A673 (cell line): ENCODE measurements at regions of chr6 and their contacts with region 1.

Region 1: DNA sequence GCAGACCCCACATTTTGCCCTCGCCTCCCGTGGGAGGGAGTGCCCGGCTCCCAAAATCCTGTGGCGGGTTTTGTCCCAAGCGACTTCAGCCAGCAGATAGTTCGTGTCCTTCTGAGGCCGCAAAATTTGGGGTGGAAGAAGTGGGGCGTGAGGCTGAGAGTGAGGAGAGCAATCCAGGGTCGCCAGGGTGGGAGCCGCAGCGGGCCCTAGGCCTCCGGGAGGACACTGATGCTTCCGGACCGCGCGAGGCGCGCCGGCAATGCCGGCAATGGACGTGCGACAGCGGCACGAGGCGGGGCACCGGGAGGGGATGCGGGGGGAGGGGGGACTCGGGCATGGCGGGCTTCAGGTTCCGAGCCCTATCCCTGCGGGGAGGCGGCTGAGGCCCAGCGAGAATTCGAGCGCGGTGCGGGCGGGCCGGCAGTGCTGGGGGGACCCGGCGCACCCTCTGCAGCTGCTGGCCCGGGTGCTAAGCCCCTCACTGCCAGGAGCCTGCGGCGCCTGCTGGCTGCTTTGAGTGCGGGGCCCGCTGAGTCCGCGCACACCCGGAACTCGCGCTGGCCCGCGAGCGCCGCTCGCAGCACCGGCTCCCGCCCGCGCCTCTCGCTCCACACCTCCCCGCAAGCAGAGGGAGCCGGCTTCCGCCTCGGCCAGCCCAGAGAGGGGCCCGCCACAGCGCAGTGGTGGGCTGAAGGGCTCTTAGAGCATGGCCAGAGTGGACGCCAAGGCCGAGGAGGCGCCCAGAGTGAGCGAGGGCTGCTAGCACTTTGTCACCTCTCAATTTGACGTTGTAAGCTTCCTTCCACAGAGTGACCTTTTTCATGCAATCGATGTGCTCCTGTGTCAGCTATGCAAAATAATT is 143.8 kb downstream of the LPA start:
- DNase-seq: peak; percentile 71
- H3K4me3 ChIP-seq: peak overlapping the region; percentile 49
- H3K27ac ChIP-seq: no peak overlapping the region
- H3K4me1 ChIP-seq: no peaks in the 10 kb centered on the region
- H3K27me3 ChIP-seq: peaks cover 13% of the 10 kb centered on the region
- CTCF ChIP-seq: no peak; the same call in 1 of the 2 replicates

Region 2: GRCh38 chr6:159017757-159018559 is 1502.3 kb before region 1 on chr6:
- CTCF ChIA-PET with region 1: no interaction called
- POLR2A ChIA-PET with region 1: no interaction called
- intact Hi-C with region 1: no loop called
- DNase-seq: no peak
- H3K4me3 ChIP-seq: no peak overlapping the region
- H3K27ac ChIP-seq: no peak overlapping the region
- H3K4me1 ChIP-seq: no peaks in the 10 kb centered on the region
- H3K27me3 ChIP-seq: no peaks in the 10 kb centered on the region
- CTCF ChIP-seq: no peak

Region 3: DNA sequence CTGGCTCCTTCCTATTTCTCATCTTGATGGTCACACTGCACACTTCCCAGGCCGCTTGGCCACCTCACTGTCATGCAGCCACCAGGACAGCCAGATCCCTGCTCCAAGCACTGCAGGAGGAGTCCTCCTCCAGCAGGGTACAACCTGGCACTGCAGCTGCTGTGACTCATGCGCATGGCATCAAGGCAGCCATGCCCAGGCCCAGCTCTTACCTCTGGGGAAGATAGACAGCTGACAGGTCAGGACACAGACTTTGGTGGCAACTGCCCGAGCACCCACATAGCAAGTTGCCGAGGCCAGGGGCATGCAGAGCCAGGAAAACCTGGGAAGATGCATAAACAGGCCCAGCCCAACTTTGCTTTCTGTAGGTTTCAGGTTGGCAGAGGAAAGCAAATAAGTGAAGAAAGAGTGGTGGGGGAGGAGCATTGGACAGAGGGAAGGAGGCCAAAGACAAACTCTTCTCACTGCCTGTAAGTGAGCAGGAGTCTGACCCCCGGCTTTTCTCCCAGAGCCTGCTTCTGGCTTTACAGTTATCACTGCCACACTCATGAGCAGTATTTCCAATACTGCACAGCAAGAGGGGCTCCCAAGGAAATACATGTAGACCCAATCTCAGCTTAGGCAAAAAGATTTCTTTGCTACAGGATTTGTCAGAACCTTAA is 133.3 kb before region 1 on chr6:
- CTCF ChIA-PET with region 1: no interaction called
- POLR2A ChIA-PET with region 1: no interaction called
- intact Hi-C with region 1: no loop called
- DNase-seq: no peak
- H3K4me3 ChIP-seq: no peak overlapping the region
- H3K27ac ChIP-seq: no peak overlapping the region
- H3K4me1 ChIP-seq: no peaks in the 10 kb centered on the region
- H3K27me3 ChIP-seq: peaks cover 12% of the 10 kb centered on the region
- CTCF ChIP-seq: no peak

Region 4: GRCh38 chr6:160510199-160510598 is 10.1 kb before region 1 on chr6:
- CTCF ChIA-PET with region 1: no interaction called
- POLR2A ChIA-PET with region 1: no interaction called
- intact Hi-C with region 1: no loop called
- DNase-seq: no peak
- H3K4me3 ChIP-seq: no peak overlapping the region
- H3K27ac ChIP-seq: no peak overlapping the region
- H3K4me1 ChIP-seq: no peaks in the 10 kb centered on the region
- H3K27me3 ChIP-seq: peaks cover 5% of the 10 kb centered on the region
- CTCF ChIP-seq: no peak

Region 5: GRCh38 chr6:160534050-160534696 is 13.9 kb after region 1 on chr6:
- CTCF ChIA-PET with region 1: interaction called, 10 read pairs
- POLR2A ChIA-PET with region 1: no interaction called
- intact Hi-C with region 1: no loop called
- DNase-seq: peak; percentile 54
- H3K4me3 ChIP-seq: no peak overlapping the region
- H3K27ac ChIP-seq: no peak overlapping the region
- H3K4me1 ChIP-seq: no peaks in the 10 kb centered on the region
- H3K27me3 ChIP-seq: no peaks in the 10 kb centered on the region
- CTCF ChIP-seq: peak; percentile 91

Region 6: DNA sequence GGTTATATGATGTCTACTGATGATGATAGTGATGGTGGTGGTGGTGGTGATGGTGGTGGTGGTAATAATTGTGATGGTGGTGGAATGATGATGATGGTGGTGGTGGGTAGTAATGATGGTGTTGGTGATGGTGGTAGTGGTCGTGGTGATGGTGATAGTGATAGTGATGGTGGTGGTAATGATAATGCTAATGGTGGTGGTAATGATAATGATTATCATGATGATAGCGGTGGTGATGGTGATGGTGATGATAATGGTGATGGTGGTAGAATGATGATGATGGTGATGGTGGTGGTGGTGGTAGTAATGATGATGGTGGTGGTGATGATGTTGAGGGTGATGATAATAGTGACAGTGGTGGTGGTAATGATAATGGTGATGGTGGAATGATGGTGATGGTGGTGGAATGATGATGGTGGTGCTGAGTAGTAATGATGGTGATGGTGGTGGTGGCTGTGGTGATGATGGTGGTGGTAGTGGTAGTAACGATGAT is 148.4 kb after region 1 on chr6:
- CTCF ChIA-PET with region 1: no interaction called
- POLR2A ChIA-PET with region 1: no interaction called
- intact Hi-C with region 1: loop called (anchors 1 kb)
- DNase-seq: no peak
- H3K4me3 ChIP-seq: no peak overlapping the region
- H3K27ac ChIP-seq: no peak overlapping the region
- H3K4me1 ChIP-seq: no peaks in the 10 kb centered on the region
- H3K27me3 ChIP-seq: no peaks in the 10 kb centered on the region
- CTCF ChIP-seq: no peak

Region 7: DNA sequence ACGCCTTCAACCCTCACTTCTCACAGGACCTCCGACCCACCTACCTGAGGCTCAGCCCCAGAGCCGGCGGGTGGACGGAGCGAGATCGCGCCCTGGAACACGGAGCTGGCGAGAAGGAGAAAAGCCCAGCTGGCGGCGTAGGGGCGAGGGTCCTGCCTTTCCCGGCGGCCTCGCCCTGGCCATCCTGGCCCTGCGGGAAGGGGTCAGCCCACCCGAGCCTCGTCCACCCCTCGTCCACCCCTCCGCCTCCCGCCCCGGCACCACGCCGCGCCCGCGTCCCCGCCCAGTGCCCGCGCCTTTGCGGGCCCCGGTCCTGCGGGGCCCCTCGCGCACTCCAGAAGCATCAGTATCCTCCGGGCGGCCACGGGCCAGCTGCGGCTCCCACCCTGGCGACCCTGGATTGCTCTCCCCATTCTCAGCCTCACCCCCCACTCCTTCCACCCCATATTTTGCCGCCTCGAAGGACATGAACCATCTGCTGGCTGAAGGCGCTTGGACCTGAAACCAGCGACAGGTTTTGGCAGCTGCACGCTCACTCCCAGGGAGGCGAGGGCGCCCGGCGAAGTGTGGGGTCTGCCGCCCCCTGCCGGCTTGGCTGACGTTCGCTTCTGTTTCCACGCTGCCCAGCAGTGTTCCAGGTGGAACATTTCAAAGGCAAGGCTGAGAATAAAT is 246.9 kb after region 1 on chr6:
- CTCF ChIA-PET with region 1: no interaction called
- POLR2A ChIA-PET with region 1: no interaction called
- intact Hi-C with region 1: loop called (anchors 10 kb)
- DNase-seq: peak; percentile 70
- H3K4me3 ChIP-seq: peak overlapping the region; percentile 41
- H3K27ac ChIP-seq: no peak overlapping the region
- H3K4me1 ChIP-seq: no peaks in the 10 kb centered on the region
- H3K27me3 ChIP-seq: peaks cover 7% of the 10 kb centered on the region
- CTCF ChIP-seq: peak; percentile 94